H1 (cell line): ENCODE measurements at regions of chr21 and their contacts with region 1.

Region 1: GRCh38 chr21:17925000-17925610 is 105.9 kb upstream of the C21orf91 start:
- DNase-seq: peak in 1 of 2 experiments; percentile 66
- H3K4me3 ChIP-seq: no peak overlapping the region
- H3K27ac ChIP-seq: no peak overlapping the region
- H3K4me1 ChIP-seq: no peaks in the 10 kb centered on the region; a peak in 2 of 7 replicates
- H3K27me3 ChIP-seq: no peaks in the 10 kb centered on the region
- CTCF ChIP-seq: peak in 2 of 3 experiments; percentile 78 to 84; a peak in 3 of 4 replicates
- EP300 ChIP-seq: no peak
- POLR2A ChIP-seq: no peak
- RAD21 ChIP-seq: peak; percentile 66 to 78

Region 2: DNA sequence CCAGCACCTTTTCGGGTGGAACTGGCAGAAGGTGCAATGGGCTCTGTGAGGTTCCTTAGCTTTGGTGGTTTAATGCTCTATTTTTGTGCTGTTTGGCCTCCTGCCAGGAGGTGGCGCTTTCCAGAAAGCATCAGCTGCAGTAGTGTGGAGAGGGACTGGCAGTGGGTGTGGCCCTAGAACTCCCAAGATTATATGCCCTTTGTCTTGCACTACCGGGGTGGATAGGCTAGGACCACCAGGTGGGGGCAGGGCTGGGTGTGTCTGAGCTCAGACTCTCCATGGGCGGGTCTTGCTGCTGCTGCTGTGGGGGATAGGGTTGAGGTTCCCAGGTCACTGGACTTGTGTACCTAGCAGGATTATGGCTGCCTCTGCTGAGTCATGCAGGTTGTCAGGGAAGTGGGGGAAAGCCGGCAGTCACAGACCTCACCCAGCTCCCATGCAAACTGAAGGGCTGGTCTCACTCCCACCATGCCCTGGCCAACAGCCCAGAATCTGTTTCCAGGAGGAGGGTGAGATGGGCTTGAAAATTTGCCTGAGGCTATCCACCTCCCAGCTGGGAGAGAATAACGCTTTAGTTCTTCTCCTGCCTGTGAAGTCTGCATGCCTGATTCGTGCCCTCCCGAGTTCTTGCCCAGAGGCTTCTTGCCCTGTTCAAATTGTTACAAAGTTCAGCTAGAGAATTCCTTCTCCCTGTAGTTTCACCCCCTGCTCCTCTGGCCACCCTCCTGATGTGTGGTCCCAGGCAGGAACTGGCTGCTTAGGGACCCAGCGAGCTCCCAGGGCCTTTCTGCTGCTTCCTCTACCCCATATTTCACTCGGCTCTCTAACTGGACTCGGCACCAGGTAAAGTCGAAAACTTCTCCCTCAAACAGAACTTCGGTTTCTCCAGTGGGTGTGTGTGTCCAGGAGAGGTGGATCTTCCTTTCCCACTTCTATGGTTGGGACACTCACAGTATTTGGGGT is 235.9 kb before region 1 on chr21:
- CTCF ChIA-PET with region 1: interaction called, 14 read pairs
- POLR2A ChIA-PET with region 1: no interaction called
- DNase-seq: peak in 1 of 2 experiments; percentile 57
- H3K4me3 ChIP-seq: no peak overlapping the region
- H3K27ac ChIP-seq: no peak overlapping the region
- H3K4me1 ChIP-seq: peaks cover 1 to 3% (median 2%) of the 10 kb centered on the region in 4 experiments; a peak in 3 of 7 replicates
- H3K27me3 ChIP-seq: no peaks in the 10 kb centered on the region
- CTCF ChIP-seq: peak; percentile 18 to 52 (median 24); a peak in 3 of 4 replicates
- EP300 ChIP-seq: no peak
- POLR2A ChIP-seq: no peak
- RAD21 ChIP-seq: peak in 1 of 2 experiments; percentile 28; a peak in 2 of 4 replicates

Region 3: DNA sequence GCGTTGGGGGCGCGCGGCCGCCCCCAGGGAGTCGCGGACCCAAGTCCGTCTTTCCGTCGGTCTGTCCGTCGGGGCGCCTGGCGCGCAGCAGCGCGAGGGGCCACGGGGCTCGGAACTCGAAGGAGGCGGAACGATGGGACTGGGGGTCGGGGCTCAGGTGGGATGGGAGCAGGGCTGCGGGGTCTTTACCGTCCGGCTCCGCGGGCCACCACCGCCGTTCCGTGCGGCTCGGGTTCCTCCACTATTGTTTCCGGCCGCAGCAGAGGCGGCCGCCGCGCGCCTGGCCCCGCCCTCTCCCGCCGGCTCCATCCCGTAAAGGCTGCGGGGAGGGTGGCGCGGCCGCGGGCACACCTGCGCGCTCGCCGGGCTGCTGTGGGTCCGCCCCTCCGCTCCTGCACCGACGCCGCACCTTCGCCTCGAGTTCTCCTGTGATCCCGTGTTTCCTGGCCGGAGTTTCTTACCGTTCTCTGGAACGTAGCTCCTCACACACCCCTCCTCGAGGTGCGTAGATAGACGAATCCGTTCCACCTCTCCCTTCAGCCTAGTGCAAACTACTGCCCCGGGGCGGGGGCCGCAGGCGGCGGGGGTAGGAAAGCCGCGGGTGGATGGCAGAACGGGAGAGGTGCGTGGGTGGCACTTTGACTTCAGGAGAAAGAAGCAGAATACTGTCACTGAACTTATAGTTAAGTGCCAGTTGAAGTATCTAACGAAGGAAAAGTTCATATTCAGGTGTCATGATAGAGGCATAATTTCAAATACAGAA is 105.8 kb before region 1 on chr21 and contains the start of gene C21orf91:
- CTCF ChIA-PET with region 1: interaction called, 10 read pairs
- POLR2A ChIA-PET with region 1: interaction called, 4 read pairs
- DNase-seq: peak; percentile 41 to 86
- H3K4me3 ChIP-seq: peak within 1 kb of the TSS; percentile 70 to 90 (median 74)
- H3K27ac ChIP-seq: peak within 1 kb of the TSS; percentile 99
- H3K4me1 ChIP-seq: peaks cover 0 to 6% (median 3%) of the 10 kb centered on the region in 4 experiments; a peak in 4 of 7 replicates
- H3K27me3 ChIP-seq: no peaks in the 10 kb centered on the region
- CTCF ChIP-seq: no peak
- EP300 ChIP-seq: peak in 1 of 2 experiments; percentile 94; a peak in 2 of 3 replicates
- POLR2A ChIP-seq: peak; percentile 85 to 95
- RAD21 ChIP-seq: no peak
- total RNA-seq, gene C21orf91: 33.6 and 33.9 TPM in 2 replicates

Region 4: GRCh38 chr21:17911628-17912027 is 13.5 kb before region 1 on chr21:
- CTCF ChIA-PET with region 1: interaction called, 18 read pairs
- POLR2A ChIA-PET with region 1: no interaction called
- DNase-seq: no peak
- H3K4me3 ChIP-seq: no peak overlapping the region
- H3K27ac ChIP-seq: no peak overlapping the region
- H3K4me1 ChIP-seq: no peaks in the 10 kb centered on the region
- H3K27me3 ChIP-seq: no peaks in the 10 kb centered on the region
- CTCF ChIP-seq: no peak
- EP300 ChIP-seq: no peak
- POLR2A ChIP-seq: no peak
- RAD21 ChIP-seq: no peak

Region 5: DNA sequence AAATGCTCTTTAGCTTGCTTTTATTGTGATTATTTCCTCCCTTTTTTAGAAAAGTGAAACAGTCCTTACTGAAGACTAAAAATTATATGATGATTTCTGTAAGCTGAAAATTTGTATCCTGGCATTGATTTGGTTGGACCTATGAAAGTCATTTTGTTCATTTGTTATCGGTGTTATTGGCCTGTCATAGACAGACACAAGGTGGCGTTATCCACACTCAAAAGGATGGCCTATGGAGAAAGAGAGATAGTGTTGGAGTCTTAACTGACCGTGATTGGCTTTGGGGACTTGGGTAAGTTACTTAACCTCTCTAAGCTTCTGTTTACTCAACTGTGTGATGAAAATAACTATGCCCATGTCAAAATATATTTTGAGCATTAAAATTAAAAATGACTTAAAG is 115.9 kb after region 1 on chr21:
- CTCF ChIA-PET with region 1: interaction called, 27 read pairs
- POLR2A ChIA-PET with region 1: no interaction called
- DNase-seq: no peak
- H3K4me3 ChIP-seq: no peak overlapping the region
- H3K27ac ChIP-seq: no peak overlapping the region
- H3K4me1 ChIP-seq: no peaks in the 10 kb centered on the region
- H3K27me3 ChIP-seq: no peaks in the 10 kb centered on the region
- CTCF ChIP-seq: peak in 2 of 3 experiments; percentile 70 to 73; a peak in 3 of 4 replicates
- EP300 ChIP-seq: no peak
- POLR2A ChIP-seq: no peak
- RAD21 ChIP-seq: peak; percentile 86 to 90